ENCODE measurements at regions of chr14 and their contacts with region 1.

Region 1: DNA sequence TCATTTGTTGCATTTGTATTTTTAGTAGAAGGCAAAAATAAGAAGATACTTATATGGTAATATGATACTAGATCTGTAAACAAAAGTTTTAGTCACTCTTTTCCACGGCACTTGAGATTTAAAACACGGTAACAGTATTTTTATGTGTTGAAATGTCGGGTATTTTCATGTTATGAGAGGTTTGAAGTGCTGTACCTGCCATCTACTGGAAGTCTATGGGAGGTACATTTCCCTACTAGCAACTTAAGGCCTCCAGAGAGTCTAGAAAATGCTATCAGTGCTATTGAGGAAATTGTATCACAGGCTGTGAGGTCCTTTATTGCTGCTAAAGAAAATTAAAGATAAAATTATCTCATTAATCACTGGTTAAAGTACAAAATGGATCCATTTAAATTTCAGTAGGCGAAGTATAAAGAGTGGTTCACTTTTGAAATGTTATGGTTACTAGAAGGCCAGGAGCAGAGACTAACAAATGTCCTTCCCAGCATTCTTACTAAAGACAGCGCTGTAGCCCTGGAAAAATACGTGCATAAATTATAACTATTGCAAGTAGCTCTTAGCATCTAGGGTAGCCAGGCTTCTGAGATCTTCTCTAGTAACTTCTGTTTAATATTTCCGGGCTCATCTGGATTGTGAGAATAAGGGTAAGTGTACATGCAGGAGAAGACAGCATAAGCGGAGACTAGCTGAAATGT is 77.6 kb upstream of the PRKD1 start:
- DNase-seq: no peak
- H3K4me3 ChIP-seq: no peak overlapping the region
- H3K27ac ChIP-seq: no peak overlapping the region
- H3K4me1 ChIP-seq: peaks cover 1% of the 10 kb centered on the region
- H3K27me3 ChIP-seq: no peaks in the 10 kb centered on the region
- CTCF ChIP-seq: peak; percentile 64 to 71 (median 68)
- EP300 ChIP-seq: no peak
- POLR2A ChIP-seq: no peak

Region 2: DNA sequence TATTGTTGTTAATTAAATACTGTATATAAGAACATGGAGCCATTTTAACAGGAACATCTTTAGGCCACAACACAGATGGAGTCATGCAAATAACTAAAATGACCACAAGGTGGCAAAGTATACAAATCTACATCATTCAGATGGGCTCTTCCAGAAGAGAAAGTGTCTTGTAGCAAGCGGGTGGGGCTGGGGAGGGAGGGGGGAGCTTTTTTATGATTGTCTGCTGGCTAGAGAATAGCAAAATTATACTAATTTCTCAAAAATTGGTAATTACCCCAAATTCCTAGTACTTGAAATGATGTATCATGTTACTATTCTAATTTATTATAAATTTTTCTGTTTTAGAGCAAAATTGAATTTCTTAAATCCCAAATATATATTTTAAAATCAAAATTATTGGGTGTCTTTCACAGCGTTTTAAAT is 456.3 kb before region 1 on chr14:
- intact Hi-C with region 1: loop called (anchors 2 to 10 kb)
- DNase-seq: no peak
- H3K4me3 ChIP-seq: no peak overlapping the region
- H3K27ac ChIP-seq: no peak overlapping the region
- H3K4me1 ChIP-seq: no peaks in the 10 kb centered on the region
- H3K27me3 ChIP-seq: no peaks in the 10 kb centered on the region
- CTCF ChIP-seq: peak; percentile 11 to 51 (median 32)
- EP300 ChIP-seq: no peak
- POLR2A ChIP-seq: no peak

Region 3: DNA sequence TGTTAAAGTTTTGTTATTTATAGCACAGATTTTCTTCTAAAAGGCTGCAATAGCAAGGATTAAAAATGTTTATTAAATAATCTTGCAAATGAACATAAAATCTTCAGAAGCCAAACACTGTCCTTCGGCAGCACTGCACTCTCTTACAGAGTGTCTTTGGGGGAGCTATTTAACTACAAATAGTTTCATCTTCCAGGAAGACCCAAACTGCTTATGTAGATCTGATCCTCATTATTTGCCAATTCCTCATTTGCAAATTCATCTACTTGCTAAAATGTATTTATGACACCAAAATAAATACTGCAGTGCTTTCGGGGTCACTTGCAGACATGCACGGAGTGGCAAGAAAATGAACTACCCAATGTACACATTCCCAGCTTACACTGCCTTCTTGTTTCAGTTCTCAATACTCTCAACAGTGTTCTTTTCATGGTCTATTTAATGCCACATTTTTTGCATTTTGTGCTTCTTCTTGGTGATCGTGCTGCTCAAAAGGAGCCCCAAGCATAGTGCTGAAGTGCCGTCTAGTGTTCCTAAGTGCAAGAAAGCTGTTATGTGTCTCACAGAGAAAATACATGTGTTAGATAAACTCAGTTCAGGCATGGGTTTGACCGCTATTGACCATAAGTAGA is 205.7 kb before region 1 on chr14:
- intact Hi-C with region 1: no loop called
- DNase-seq: no peak
- H3K4me3 ChIP-seq: no peak overlapping the region
- H3K27ac ChIP-seq: no peak overlapping the region
- H3K4me1 ChIP-seq: no peaks in the 10 kb centered on the region
- H3K27me3 ChIP-seq: no peaks in the 10 kb centered on the region
- CTCF ChIP-seq: no peak
- EP300 ChIP-seq: no peak
- POLR2A ChIP-seq: no peak

Region 4: DNA sequence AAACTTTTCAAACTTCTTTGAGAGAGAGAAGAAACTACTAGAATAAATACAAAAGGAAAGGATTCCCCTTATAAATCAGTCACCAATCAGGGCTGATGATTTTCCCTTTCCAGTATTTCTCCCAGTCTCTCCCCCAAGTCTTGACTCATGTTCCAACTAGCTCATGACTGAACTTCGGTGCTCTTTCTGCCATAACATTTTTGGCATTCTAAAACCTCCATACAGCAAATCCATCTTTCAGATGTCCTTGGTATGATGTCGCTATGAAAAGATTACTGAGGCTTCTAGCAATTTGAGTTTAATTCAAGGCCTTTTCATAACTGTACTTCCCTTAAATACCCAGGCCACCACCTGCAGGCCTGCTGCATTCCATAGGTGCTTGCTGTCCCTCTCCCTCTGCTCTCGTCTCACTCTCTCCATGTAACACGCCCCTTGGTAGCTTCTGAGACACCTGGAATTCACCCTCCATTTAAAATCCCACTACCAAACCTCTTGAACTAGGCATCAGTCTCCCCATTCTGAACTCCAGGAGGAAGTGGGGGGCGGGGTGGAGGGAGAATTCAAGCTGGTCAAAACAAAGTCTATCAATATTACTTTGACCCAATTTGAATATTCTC is 80.0 kb before region 1 on chr14:
- intact Hi-C with region 1: no loop called
- DNase-seq: no peak
- H3K4me3 ChIP-seq: no peak overlapping the region
- H3K27ac ChIP-seq: no peak overlapping the region
- H3K4me1 ChIP-seq: peaks cover 7% of the 10 kb centered on the region
- H3K27me3 ChIP-seq: no peaks in the 10 kb centered on the region
- CTCF ChIP-seq: no peak
- EP300 ChIP-seq: no peak
- POLR2A ChIP-seq: no peak

Region 5: DNA sequence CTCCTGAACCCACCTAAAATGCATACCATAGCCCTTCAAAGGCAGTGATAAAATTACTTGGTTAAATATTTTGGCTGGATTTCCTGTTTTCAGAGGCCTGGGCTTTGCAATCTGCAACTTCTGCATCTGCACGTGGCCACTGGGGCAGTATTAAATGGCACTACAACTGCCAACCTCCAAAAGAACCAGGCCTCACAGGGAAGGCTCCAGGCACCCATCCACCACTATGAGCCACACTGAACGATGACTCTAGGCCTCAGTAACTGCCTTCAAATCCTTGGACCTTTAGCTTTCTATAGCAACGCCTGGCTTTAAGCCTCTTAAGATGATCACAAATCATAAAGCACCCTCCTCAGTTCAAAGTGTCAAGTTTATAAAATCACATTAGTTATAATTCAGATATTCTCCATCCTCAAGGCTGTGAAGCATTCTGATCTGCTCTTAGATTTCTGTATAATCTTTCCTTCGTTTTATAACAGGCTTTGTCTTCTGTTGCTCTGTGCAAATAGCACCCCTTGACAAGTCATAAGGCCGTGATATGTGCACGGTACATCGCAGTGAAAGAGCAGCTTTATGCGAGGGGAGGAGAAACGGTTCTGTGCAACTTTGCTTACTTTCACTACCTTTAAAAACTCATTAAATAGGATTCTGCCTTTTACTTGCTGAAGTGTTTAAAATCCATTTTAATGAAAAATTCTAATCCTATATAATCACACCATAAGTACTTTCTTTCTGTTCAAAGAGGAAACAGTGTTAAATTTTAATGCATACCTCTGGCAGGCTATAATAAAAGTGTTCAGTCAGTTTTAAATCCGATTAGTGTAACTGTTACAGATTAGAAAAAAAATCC is 357.3 kb after region 1 on chr14:
- intact Hi-C with region 1: no loop called
- DNase-seq: no peak
- H3K4me3 ChIP-seq: no peak overlapping the region
- H3K27ac ChIP-seq: no peak overlapping the region
- H3K4me1 ChIP-seq: no peaks in the 10 kb centered on the region
- H3K27me3 ChIP-seq: no peaks in the 10 kb centered on the region
- CTCF ChIP-seq: no peak
- EP300 ChIP-seq: no peak
- POLR2A ChIP-seq: no peak